ENCODE measurements at regions of chr1 and their contacts with region 1.

Region 1: DNA sequence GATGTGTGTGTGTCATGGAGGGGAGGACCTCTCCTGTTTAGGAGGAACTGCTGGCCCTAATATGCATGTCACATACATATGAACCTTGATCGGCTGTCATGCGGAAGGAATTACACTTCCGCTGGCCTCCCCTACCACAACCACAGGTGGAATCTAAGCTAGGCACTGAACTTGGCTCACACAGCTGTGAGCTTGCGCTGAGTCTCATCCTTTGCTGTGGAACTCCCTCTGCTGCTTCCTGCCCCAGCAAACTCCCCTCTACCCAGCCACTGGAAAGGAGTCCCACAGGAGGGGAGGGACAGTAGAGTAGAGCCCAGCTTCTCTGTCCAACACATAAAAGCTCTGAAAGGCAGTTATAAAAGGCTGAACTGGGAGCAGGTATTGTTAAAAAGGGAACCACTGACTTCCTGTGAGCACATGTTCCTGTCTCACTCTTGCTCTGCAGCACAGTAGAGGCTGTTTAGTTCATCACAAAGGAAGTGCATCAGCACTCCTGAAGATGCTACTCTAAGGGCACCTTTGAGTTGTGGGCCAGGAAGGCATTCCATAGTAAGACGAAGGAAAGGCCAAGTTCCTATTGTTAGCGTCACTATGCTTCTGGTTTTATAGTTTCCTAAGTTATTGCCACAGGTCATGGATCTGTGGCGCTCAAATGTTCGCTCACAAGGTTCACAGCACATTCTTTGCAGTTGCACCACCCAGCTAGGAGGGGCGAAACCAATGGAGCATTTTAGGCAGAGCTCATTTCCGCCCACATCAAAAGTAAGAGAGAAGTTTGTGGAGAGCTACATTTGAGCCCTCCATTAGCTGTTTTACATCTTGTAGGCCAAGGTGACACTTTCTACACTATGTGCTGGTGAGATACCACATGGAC is 17.7 kb upstream of the PTPRC start:
- DNase-seq: peak; percentile 65
- ATAC-seq: peak; percentile 72
- H3K4me3 Mint-ChIP-seq: peak overlapping the region; percentile 79
- H3K27ac Mint-ChIP-seq: peak overlapping the region; percentile 97
- H3K4me1 Mint-ChIP-seq: peaks cover 86% of the 10 kb centered on the region
- H3K27me3 Mint-ChIP-seq: no peaks in the 10 kb centered on the region
- CTCF ChIP-seq: no peak

Region 2: DNA sequence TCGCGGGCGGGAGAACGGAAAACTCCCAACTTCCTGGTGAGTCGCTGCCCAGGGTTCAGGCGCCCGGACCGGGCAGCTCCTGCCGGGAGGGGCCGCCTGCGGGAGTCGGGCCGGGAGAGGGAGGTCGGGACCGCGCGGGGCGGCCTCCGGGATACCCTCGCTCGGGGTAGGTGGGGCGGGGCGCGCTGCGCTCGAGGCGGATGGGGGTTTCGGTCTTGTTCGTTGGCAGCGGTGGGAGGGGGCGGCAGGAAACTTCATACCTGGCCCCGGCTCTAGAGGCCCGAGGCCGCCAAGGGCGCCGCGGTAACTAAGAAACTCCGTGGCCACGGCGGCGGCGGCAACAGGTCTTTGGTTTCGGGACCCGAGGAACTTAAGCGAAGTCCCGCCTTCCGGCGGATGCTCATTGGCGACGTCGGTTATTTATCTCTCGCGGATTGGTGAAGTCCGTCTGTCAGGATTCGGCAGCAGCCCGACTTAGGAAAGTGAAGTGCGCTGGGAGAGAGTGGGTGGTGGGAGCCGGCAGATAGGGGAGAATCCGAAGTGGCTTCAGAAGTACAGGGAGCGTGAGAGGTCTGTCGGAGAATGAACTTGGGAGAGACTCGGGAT is 463.8 kb before region 1 on chr1:
- CTCF ChIA-PET with region 1: no interaction called
- POLR2A ChIA-PET with region 1: no interaction called
- intact Hi-C with region 1: loop called (anchors 1 kb)
- DNase-seq: peak; percentile 73
- ATAC-seq: peak; percentile 50
- H3K4me3 Mint-ChIP-seq: peak overlapping the region; percentile 98
- H3K27ac Mint-ChIP-seq: peak overlapping the region; percentile 98
- H3K4me1 Mint-ChIP-seq: peaks cover 49% of the 10 kb centered on the region
- H3K27me3 Mint-ChIP-seq: no peaks in the 10 kb centered on the region
- CTCF ChIP-seq: no peak

Region 3: GRCh38 chr1:198333744-198334143 is 287.4 kb before region 1 on chr1:
- CTCF ChIA-PET with region 1: no interaction called
- POLR2A ChIA-PET with region 1: no interaction called
- intact Hi-C with region 1: no loop called
- DNase-seq: no peak
- ATAC-seq: no peak
- H3K4me3 Mint-ChIP-seq: no peak overlapping the region
- H3K27ac Mint-ChIP-seq: no peak overlapping the region
- H3K4me1 Mint-ChIP-seq: no peaks in the 10 kb centered on the region
- H3K27me3 Mint-ChIP-seq: peaks cover 11% of the 10 kb centered on the region
- CTCF ChIP-seq: no peak

Region 4: GRCh38 chr1:198543670-198544260 is 77.4 kb before region 1 on chr1:
- CTCF ChIA-PET with region 1: interaction called, 3 read pairs
- POLR2A ChIA-PET with region 1: interaction called, 15 read pairs
- intact Hi-C with region 1: loop called (anchors 1 kb)
- DNase-seq: no peak
- ATAC-seq: peak; percentile 85
- H3K4me3 Mint-ChIP-seq: peak overlapping the region; percentile 62
- H3K27ac Mint-ChIP-seq: peak overlapping the region; percentile 92
- H3K4me1 Mint-ChIP-seq: peaks cover 66% of the 10 kb centered on the region
- H3K27me3 Mint-ChIP-seq: no peaks in the 10 kb centered on the region
- CTCF ChIP-seq: no peak

Region 5: DNA sequence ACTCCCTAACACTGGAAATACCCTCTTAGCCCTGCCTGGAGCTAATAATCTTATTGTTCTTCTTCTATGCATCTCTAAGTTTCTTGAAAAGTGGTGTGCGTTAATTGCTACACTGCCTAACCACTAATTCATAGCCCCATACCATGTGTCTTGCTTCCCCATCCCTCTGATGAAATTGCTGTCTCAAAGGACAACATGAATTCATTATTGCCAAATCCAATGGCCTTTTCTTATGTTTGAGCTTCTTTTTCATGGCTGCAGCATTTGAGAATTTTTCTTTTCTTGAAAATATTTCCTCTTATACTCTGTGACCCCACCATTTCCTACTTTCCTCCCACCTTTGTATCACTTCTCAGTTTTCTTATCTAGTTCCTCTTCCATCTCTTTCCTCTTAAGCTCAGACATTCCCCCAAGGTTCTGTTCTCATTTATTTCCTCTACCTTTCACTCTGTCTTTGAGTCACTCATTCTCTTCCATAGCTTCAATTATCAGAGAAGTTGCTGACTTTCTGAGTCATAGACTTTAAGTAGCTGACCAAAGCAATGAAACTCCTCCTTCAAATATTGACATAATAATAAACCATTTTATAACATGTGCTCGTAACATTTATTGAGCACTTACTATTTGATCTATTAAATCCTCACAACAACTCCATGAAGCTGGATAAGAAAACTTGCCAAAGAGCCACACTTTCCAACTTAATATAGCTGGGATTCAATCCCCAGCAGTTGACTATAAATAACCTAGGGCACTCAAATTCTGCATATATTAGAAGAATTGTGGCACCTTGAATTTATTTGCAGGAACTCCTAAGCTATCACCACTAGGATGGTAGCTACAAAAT is 45.2 kb before region 1 on chr1:
- CTCF ChIA-PET with region 1: interaction called, 3 read pairs
- POLR2A ChIA-PET with region 1: interaction called, 20 read pairs
- intact Hi-C with region 1: loop called (anchors 1 kb)
- DNase-seq: no peak
- ATAC-seq: peak; percentile 89
- H3K4me3 Mint-ChIP-seq: peak overlapping the region; percentile 21
- H3K27ac Mint-ChIP-seq: peak overlapping the region; percentile 82
- H3K4me1 Mint-ChIP-seq: peaks cover 30% of the 10 kb centered on the region
- H3K27me3 Mint-ChIP-seq: no peaks in the 10 kb centered on the region
- CTCF ChIP-seq: no peak

Region 6: DNA sequence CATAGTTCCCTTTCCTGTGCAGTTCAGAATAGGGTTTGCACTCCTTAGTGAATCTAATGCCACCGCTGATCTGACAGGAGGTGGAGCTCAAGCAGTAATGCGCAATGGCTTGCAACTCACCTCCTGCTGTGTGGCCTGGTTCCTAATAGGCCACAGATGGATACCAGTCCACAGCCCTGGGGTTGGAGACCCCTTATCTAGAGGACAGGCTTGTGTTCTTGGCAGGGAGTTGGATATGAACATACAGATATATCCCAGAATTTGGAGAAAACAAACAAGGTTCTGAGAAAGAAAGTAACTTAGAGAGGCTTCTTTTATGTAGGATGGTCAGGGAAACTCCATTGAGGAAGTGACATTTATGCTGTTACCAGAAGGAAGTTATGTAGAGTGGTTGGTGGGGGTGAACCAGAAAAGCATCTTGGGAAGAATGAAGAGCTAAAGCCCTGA is 12.5 kb after region 1 on chr1:
- CTCF ChIA-PET with region 1: interaction called, 46 read pairs
- POLR2A ChIA-PET with region 1: interaction called, 307 read pairs
- intact Hi-C with region 1: loop called (anchors 1 kb)
- DNase-seq: peak; percentile 27
- ATAC-seq: peak; percentile 87
- H3K4me3 Mint-ChIP-seq: peak overlapping the region; percentile 9
- H3K27ac Mint-ChIP-seq: peak overlapping the region; percentile 80
- H3K4me1 Mint-ChIP-seq: peaks cover 95% of the 10 kb centered on the region
- H3K27me3 Mint-ChIP-seq: no peaks in the 10 kb centered on the region
- CTCF ChIP-seq: no peak

Region 7: DNA sequence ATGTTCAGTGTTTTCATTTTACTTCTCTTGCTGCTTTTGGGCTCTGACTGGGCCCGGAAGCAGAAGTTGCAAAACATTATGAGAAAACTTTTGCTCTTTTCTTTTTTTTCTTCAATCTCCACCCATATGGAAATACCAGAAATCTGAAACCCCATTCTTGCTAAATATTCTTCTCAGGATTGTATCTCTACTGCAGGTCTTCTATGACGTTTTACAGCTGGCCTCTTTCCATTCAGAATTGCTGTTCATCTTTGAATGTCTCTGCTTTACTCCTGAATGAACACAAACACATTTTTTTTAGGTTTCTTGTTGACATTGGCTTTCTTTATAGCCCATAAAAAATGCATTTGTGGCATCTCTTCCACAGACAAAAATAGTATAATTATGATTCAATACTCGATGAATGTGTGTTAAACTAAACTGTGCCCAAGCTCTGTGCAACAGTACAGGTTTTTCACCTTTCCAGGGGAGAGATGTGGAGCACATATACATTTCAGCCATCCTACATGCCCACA is 36.4 kb after region 1 on chr1:
- CTCF ChIA-PET with region 1: interaction called, 3 read pairs
- POLR2A ChIA-PET with region 1: interaction called, 36 read pairs
- intact Hi-C with region 1: loop called (anchors 1 kb)
- DNase-seq: no peak
- ATAC-seq: peak; percentile 57
- H3K4me3 Mint-ChIP-seq: peak overlapping the region; percentile 56
- H3K27ac Mint-ChIP-seq: peak overlapping the region; percentile 84
- H3K4me1 Mint-ChIP-seq: peaks cover 78% of the 10 kb centered on the region
- H3K27me3 Mint-ChIP-seq: no peaks in the 10 kb centered on the region
- CTCF ChIP-seq: no peak

Region 8: DNA sequence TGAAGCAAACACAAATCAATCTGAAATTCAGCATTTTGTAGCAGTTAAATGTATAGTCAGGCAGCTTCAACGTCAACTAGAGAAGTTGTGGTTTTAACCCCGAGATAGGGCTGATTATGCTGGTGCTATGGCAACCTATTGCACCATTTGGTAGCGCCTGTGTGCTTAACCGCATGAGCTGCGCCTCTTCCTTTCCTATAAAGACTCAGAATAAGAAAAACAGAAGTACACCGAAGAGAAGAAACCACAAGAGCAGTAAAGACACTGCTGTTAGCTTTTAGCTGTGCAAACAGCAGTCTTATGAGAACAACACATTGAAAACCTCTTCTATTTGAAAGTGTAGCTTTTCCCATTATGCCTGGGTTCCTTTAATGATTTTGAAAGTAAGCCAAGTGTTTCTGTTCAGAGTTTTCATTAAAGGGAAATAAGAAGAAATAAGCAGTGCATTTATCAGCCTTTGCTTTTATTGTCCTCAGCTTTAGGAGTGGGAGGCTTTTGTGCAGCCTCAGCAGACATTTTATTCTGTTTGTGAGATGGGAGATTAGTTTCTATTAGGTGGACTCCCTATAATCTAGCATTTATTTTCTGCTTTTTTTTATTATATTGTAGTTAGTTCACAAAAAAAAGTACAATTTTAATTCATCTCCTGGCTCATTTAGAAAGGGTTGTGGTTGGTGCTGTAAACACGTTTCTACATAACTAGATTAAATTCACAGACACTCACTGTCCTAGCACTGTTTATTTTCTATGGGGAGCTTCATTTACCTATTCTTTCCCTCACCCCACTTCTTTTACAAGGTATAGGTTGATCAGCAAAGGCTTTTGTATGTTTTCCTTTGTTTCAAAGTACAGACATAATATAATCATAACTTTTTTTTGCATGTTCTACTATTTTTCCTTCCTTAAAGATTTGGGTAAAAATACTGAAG is 60.9 kb after region 1 on chr1:
- CTCF ChIA-PET with region 1: interaction called, 34 read pairs
- POLR2A ChIA-PET with region 1: interaction called, 122 read pairs
- intact Hi-C with region 1: loop called (anchors 1 kb)
- DNase-seq: peak; percentile 42
- ATAC-seq: peak; percentile 73
- H3K4me3 Mint-ChIP-seq: peak overlapping the region; percentile 63
- H3K27ac Mint-ChIP-seq: peak overlapping the region; percentile 88
- H3K4me1 Mint-ChIP-seq: peaks cover 92% of the 10 kb centered on the region
- H3K27me3 Mint-ChIP-seq: no peaks in the 10 kb centered on the region
- CTCF ChIP-seq: no peak

Measured in activated B cell treated with CpG ODN at 0.5 μM for 24 hours (primary cell).